ENCODE measurements at regions of chr2 and their contacts with region 1.

Region 1: DNA sequence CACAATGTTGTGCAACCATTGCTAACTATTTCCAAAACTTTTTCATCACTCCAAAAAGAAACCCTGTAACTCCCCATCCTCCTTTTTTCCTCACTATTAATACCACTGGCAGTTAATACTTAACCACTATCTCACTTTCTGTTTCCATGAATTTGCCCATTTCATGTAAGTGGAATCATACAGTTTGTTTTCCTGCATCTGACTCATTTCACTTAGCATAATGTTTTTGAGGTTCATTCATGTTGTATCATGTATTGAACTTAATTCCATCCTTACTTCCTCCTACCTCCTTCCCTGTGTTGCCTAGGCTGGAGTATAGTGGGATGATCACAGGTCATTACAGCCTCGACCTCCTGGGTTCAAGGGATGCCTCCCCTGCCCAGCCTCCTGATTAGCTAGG is 68.3 kb downstream of the FAM117B start:
- DNase-seq: no peak
- ATAC-seq: no peak
- H3K4me3 ChIP-seq: no peak overlapping the region
- H3K4me3 Mint-ChIP-seq: no peak overlapping the region
- H3K27ac ChIP-seq: no peak overlapping the region
- H3K27ac Mint-ChIP-seq: peak overlapping the region in 1 of 2 donors; percentile 8
- H3K4me1 ChIP-seq: peaks cover 7 to 21% of the 10 kb centered on the region in 2 experiments
- H3K4me1 Mint-ChIP-seq: peaks cover 61 to 68% (median 63%) of the 10 kb centered on the region in 3 donors
- H3K27me3 ChIP-seq: no peaks in the 10 kb centered on the region
- H3K27me3 Mint-ChIP-seq: no peaks in the 10 kb centered on the region

Region 2: GRCh38 chr2:202574541-202574940 is 128.6 kb before region 1 on chr2:
- CTCF ChIA-PET with region 1: interaction called in 1 of 2 experiments, 13 read pairs
- POLR2A ChIA-PET with region 1: no interaction called
- DNase-seq: no peak
- ATAC-seq: no peak
- H3K4me3 ChIP-seq: no peak overlapping the region
- H3K4me3 Mint-ChIP-seq: no peak overlapping the region
- H3K27ac ChIP-seq: no peak overlapping the region
- H3K27ac Mint-ChIP-seq: no peak overlapping the region
- H3K4me1 ChIP-seq: no peaks in the 10 kb centered on the region
- H3K4me1 Mint-ChIP-seq: no peaks in the 10 kb centered on the region
- H3K27me3 ChIP-seq: no peaks in the 10 kb centered on the region
- H3K27me3 Mint-ChIP-seq: no peaks in the 10 kb centered on the region

Region 3: DNA sequence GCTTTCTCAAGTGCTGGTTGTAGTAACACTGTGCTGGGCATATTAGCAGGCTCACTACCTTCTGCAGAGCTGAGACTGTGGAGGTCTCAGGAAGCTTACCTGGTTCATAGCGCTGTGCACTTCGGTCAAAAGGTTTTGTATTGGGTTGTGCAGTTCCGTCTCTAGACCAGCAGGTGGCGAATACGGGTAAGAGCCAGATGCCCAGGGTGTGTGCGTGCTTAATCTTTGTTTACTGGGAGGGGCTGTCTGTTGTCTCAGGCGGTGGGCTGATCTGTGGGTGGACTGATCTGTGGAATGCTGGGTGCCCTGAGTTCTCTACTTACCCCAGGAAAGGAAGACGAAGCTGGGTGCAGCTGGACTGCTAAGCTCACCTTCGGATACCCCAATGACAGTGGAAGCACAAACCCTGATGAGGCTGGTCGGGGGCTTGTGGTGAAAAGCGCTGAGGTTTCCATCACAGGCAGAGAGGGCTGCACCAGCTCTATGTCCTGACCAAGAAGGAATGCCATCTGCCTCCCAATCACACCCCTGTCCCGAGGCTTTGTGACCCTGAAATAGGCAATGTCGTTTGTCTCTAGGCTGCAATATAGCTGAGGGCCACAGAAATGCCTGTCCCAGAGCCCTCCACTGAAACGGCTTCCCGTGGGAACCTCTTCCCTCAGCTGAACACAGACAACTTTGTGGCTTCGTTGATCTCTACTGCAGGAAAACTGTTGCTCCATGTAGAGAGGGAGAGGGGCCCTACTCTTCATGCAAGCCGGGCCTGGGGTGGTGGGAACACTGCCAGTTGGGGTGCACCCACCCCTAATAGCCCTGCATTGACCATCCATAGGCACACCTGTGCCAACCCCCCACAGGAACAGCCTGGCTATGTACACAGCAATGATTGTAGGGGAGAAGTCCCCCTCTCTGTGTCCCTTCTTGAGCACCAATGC is 114.2 kb before region 1 on chr2:
- CTCF ChIA-PET with region 1: interaction called, 6 to 16 read pairs
- POLR2A ChIA-PET with region 1: no interaction called
- DNase-seq: peak; percentile 47 to 83 (median 62)
- ATAC-seq: peak; percentile 94 to 99 (median 96)
- H3K4me3 ChIP-seq: no peak overlapping the region
- H3K4me3 Mint-ChIP-seq: no peak overlapping the region
- H3K27ac ChIP-seq: no peak overlapping the region
- H3K27ac Mint-ChIP-seq: peak overlapping the region in 1 of 2 donors; percentile 29
- H3K4me1 ChIP-seq: peaks cover 8 to 10% of the 10 kb centered on the region in 2 experiments
- H3K4me1 Mint-ChIP-seq: peaks cover 8 to 10% (median 8%) of the 10 kb centered on the region in 3 donors
- H3K27me3 ChIP-seq: no peaks in the 10 kb centered on the region
- H3K27me3 Mint-ChIP-seq: peaks cover 0 to 2% of the 10 kb centered on the region in 2 donors

Region 4: GRCh38 chr2:203934041-203934492 is 1231.0 kb after region 1 on chr2:
- CTCF ChIA-PET with region 1: no interaction called
- POLR2A ChIA-PET with region 1: interaction called in 1 of 2 experiments, 11 read pairs
- DNase-seq: peak in 5 of 35 experiments; percentile 11 to 57 (median 33)
- ATAC-seq: peak; percentile 23 to 42 (median 26)
- H3K4me3 ChIP-seq: peak overlapping the region; percentile 8 to 11
- H3K4me3 Mint-ChIP-seq: peak overlapping the region; percentile 58 to 70 (median 62)
- H3K27ac ChIP-seq: peak overlapping the region; percentile 85
- H3K27ac Mint-ChIP-seq: peak overlapping the region; percentile 94
- H3K4me1 ChIP-seq: peaks cover 37 to 45% of the 10 kb centered on the region in 2 experiments
- H3K4me1 Mint-ChIP-seq: peaks cover 53 to 81% (median 60%) of the 10 kb centered on the region in 3 donors
- H3K27me3 ChIP-seq: no peaks in the 10 kb centered on the region
- H3K27me3 Mint-ChIP-seq: no peaks in the 10 kb centered on the region

Measured in T-cell (primary cell).